ENCODE measurements at regions of chr17 and their contacts with region 1.

Region 1: GRCh38 chr17:16293931-16294330 is 59.3 kb downstream of the CENPV start:
- DNase-seq: no peak
- H3K4me3 ChIP-seq: no peak overlapping the region
- H3K27me3 ChIP-seq: no peaks in the 10 kb centered on the region
- CTCF ChIP-seq: no peak

Region 2: DNA sequence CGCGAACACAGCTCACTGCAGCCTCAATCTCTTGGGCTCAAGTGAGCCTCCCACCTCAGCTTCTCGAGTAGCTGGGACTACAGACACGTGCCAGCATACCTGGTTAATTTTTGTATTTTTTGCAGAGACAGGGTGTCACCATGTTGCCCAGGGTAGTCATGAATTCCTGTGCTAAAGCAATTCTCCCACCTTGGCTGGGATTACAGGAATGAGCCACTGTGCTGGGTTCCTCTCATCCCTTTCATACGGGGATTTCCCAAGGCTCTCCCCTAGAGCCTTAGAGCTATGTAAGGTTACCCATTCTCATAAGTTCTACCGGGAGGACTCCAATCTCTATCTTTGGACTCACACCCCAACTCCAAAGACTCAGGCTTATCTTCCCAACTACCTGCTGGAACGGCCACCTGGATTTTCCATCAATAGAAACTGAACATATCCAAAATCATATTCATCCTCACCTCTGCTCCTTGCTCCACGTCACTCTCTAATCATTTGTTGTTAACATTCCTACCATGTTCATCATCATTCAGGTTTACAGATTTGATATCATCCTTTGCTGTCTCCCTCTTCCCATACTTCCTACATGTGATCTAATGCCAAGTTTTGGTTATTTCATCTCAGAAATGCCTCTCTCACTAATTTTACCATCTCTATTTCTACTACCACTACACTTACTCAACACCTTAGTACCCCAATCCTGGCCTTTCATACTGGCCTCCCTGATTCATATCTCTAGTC is 171.1 kb before region 1 on chr17:
- CTCF ChIA-PET with region 1: no interaction called
- POLR2A ChIA-PET with region 1: no interaction called
- DNase-seq: no peak
- H3K4me3 ChIP-seq: no peak overlapping the region
- H3K27me3 ChIP-seq: no peaks in the 10 kb centered on the region
- CTCF ChIP-seq: no peak

Region 3: DNA sequence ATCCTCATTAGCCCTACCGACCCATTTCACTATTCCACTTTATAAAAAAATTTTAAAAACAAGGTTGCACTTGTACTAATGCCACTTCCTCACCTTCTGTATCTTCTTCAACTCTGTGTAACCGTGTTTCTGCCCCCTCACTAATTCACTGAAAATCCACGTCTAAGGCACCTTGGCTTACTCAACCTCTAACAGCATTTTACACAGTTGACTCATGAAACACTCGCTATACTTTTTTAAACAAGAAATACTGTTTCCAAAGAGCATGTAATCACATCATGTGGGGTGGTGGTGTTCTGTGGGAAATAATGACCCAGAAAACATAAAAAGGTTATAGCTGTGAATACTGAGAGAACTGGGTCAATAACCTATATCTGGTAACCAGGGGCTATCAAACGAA is 158.5 kb before region 1 on chr17:
- CTCF ChIA-PET with region 1: no interaction called
- POLR2A ChIA-PET with region 1: no interaction called
- DNase-seq: no peak
- H3K4me3 ChIP-seq: no peak overlapping the region
- H3K27me3 ChIP-seq: no peaks in the 10 kb centered on the region
- CTCF ChIP-seq: no peak

Region 4: GRCh38 chr17:16269658-16270057 is 24.3 kb before region 1 on chr17:
- CTCF ChIA-PET with region 1: no interaction called
- POLR2A ChIA-PET with region 1: no interaction called
- DNase-seq: peak; percentile 38
- H3K4me3 ChIP-seq: no peak overlapping the region
- H3K27me3 ChIP-seq: no peaks in the 10 kb centered on the region
- CTCF ChIP-seq: no peak

Region 5: GRCh38 chr17:16304830-16305229 is 10.9 kb after region 1 on chr17:
- CTCF ChIA-PET with region 1: interaction called, 17 read pairs
- POLR2A ChIA-PET with region 1: no interaction called
- DNase-seq: no peak
- H3K4me3 ChIP-seq: no peak overlapping the region
- H3K27me3 ChIP-seq: no peaks in the 10 kb centered on the region
- CTCF ChIP-seq: peak; percentile 57

Region 6: GRCh38 chr17:16353317-16354174 is 59.6 kb after region 1 on chr17 and contains the start of gene CENPV:
- CTCF ChIA-PET with region 1: no interaction called
- POLR2A ChIA-PET with region 1: no interaction called
- DNase-seq: no peak
- H3K4me3 ChIP-seq: peak within 1 kb of the TSS; percentile 74
- H3K27me3 ChIP-seq: no peaks in the 10 kb centered on the region
- CTCF ChIP-seq: no peak
- polyA plus RNA-seq, gene CENPV: 39.2 and 41.5 TPM in 2 replicates

Measured in BJ (cell line).